GM23248 (cell line): ENCODE measurements at regions of chr5 and their contacts with region 1.

Region 1: DNA sequence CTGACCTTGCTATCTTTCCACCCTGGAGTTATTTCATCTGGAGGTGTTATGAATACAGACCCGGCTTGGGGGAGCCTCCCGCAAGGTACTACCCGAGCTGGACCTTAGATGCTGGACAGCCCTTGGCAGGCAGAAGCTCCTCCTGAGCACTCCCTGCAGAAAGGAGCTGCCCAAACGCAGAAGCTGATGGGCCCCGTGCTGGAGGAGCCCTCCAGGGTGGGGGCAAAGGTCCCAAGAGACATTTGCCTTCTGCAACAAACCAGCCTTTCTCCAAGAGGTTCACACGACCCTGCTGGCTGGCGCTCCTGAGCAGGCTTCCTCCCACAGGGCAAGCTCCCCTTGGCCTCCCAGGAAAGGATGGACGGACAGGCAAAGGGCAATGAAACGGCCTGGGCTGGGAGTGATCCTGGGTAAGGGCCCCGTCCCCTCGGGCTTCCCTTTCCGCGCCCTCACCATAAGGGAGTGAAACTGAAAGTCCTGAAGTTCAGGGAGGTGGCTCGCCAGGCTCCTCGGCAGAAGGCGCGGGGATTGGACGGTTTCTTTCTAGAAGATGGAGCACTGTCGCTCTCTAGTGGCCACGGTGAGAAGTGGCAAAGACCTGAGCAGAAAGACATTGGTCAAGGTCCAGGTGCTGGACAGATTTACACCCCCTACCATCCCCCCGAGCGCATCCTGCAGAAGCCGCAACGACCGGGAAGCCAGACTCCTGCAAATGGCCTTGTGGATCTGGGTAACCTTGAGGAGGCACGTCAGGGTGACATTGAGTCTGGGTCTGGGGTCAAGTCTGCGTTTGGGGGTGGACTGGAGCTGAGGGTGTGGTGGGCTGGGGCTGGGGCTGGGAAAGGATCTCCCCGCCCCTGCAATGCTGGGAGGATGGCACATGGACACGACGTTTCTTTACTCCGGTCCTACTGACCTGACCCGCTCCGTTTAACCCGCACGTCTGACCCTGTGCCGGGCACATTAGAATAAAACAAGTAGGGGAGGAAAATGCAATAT is 56.4 kb downstream of the NEURL1B start:
- DNase-seq: peak; percentile 92
- H3K4me3 ChIP-seq: peak overlapping the region; percentile 81
- H3K27ac ChIP-seq: no peak overlapping the region
- H3K4me1 ChIP-seq: no peaks in the 10 kb centered on the region
- H3K27me3 ChIP-seq: peaks cover 11% of the 10 kb centered on the region

Region 2: DNA sequence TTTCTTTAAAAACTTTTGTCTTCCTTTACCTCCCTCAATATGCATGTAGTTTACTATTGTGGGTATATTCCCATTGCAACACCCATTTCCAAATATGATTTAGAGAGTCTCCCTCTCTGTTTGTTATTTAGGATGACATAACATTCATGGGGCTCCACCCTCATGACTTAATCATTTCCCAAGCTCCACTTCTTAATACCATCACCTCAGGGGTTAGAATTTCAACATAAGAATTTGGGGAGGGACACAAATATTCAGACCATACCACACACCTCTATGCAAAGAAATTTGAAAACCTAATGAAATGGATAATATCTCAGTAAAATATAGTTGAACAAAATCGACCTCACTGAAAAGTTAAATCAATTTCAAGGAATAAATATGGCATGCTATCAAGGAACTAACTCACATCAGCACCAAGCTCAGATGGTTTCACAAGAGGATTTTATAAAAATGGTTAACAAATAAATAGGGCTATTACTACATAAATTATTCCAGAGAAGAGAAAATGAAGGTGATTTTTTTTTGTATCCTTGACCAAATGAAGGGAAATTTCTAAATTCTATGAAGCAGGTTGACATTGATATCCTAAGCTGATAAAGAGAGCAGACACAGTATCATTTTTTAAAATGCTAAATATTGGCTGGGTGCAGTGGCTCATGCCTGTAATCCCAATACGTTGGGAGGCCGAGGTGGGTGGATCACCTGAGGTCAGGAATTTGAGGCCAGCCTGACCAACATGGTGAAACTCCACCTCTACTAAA is 393.7 kb before region 1 on chr5:
- in situ Hi-C with region 1: no loop called
- DNase-seq: peak; percentile 61
- H3K4me3 ChIP-seq: no peak overlapping the region
- H3K27ac ChIP-seq: no peak overlapping the region
- H3K4me1 ChIP-seq: 0 out of 2 replicates have a peak, but pooled peaks cover 6% of the 10 kb centered on the region
- H3K27me3 ChIP-seq: no peaks in the 10 kb centered on the region

Region 3: DNA sequence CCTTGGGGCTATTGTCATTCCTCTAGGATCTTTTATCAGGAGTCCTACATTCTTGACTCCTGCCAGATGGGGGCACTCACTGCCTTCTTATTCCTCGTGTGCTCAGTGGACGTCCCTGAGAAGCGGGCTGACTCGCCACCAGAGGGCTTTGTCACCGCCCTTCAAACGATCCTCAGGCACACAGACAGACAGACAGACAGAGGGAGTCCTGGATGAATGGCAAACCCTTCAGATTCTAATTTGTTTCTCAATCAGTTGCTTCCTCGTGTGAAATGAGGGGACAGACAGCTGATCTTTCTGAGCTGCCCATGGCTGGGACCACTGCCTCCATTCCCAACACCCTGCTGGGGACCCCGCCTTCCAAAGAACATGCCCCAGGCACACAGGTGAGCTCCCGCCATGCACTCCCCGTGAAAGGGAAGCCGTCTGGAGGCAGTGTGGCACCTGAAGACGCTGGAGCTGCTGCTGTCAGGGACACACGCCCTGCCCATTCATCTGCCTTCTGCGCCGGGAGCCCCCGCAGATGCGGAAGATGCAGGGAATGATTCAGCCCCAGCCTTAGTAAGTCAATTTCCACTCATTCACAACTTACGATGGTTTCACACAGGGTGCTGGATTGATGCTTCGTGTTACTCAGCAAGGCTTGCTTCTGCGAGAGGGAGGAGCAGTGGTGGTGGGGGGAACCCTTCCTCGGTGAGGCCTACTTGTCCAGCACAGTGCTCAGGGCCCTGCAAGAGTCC is 218.2 kb before region 1 on chr5:
- in situ Hi-C with region 1: loop called (anchors 5 kb)
- DNase-seq: peak; percentile 93
- H3K4me3 ChIP-seq: no peak overlapping the region
- H3K27ac ChIP-seq: no peak overlapping the region
- H3K4me1 ChIP-seq: no peaks in the 10 kb centered on the region
- H3K27me3 ChIP-seq: no peaks in the 10 kb centered on the region

Region 4: GRCh38 chr5:173412566-173412965 is 715.1 kb after region 1 on chr5:
- in situ Hi-C with region 1: no loop called
- DNase-seq: no peak
- H3K4me3 ChIP-seq: no peak overlapping the region
- H3K27ac ChIP-seq: no peak overlapping the region
- H3K4me1 ChIP-seq: no peaks in the 10 kb centered on the region
- H3K27me3 ChIP-seq: no peaks in the 10 kb centered on the region